MCF 10A (cell line): ENCODE measurements at regions of chr7 and their contacts with region 1.

Region 1: GRCh38 chr7:129258649-129259389 is 34.0 kb downstream of the AHCYL2 start:
- DNase-seq: no peak
- H3K4me3 Mint-ChIP-seq: no peak overlapping the region
- H3K27ac Mint-ChIP-seq: no peak overlapping the region
- H3K4me1 Mint-ChIP-seq: no peaks in the 10 kb centered on the region
- H3K27me3 Mint-ChIP-seq: no peaks in the 10 kb centered on the region
- CTCF ChIP-seq: no peak

Region 2: DNA sequence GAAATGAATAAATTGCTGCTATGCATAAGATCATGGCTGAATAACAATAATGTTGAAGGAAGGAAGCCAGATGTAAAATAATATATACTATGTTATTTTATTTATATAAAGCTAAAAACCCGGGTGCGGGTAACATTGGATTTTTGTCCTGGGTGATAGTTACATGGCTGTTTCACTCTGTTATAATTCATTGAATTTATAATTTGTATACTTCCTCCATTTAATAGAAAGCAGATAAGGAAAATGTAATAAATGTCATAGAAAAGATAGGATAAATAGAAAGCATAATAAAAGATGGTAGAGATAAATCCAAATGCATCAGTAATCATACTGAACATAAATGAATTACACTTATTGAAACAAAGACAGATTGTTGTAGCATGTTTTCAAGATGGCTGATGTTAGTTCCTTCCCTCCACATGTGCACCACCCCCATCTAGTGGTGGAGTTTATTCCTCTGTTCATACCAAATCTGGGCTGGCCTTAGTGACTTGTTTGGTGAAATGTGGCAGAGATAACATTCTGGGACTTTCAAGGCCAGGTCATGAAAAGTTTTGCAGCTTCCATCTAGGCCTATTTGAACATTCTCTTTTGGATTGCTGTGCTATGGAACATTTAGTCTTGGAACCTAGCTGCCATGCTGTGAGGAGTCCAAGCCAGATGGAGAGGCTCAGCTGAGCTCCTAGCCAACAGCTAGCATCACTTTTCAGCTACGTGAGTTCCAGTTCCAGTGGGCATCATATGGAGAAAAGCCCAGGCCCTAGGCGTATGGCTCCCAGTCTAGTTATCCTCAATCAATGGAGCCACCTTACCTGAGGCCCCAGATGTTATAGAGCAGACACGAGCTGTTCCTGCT is 12.9 kb after region 1 on chr7:
- CTCF ChIA-PET with region 1: interaction called, 12 read pairs
- POLR2A ChIA-PET with region 1: interaction called, 3 read pairs
- intact Hi-C with region 1: no loop called
- DNase-seq: peak; percentile 66
- H3K4me3 Mint-ChIP-seq: no peak overlapping the region
- H3K27ac Mint-ChIP-seq: no peak overlapping the region
- H3K4me1 Mint-ChIP-seq: peaks cover 5% of the 10 kb centered on the region
- H3K27me3 Mint-ChIP-seq: no peaks in the 10 kb centered on the region
- CTCF ChIP-seq: peak; percentile 52